Naive thymus-derived CD4-positive, alpha-beta T cell (primary cell): ENCODE measurements at regions of chr2 and their contacts with region 1.

Region 1: DNA sequence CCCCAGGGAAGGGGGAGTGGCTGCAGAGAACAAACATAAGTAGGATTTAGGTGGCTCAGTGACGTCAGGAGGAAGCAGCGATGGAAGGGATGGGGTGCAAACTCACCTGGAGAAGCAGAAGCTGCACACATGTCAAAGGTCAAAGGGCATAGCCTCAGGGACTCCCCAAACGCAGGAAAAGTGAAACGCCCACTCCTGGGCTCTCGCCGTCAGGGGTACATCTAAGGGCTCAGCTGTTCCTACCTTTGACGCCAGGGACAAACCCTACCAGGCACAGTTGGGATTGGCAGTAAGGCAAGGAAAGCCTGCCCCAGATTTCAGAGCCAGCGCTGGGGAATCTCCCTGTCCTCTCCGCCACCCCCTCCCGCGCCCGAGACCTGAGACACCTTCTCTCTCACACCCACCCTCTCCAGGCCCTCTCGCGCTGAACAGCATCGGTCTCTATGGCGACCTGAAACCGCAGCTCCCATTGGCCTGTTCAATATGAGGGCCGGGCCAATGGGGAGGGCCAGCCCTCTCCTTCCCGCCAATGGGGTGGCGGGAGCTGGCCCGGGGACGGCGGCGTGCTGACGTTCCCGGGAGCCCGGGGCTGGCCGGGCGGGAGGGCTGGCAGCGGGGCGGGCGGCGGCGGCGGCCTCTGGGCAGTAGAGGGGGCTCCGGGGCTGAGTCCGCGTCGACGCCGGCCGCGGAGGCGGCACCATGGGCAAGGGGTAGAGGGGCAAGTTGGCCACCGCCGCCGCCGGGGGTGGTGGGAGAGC is at the starts of genes CCDC148 and PKP4:
- DNase-seq: peak; percentile 70 to 94 (median 87)
- ATAC-seq: peak; percentile 95
- H3K4me3 ChIP-seq: peak within 1 kb of the TSS; percentile 79
- H3K4me3 Mint-ChIP-seq: peak within 1 kb of the TSS; percentile 88 to 97 (median 94)
- H3K27ac ChIP-seq: peak within 1 kb of the TSS; percentile 70
- H3K27ac Mint-ChIP-seq: peak within 1 kb of the TSS; percentile 70 to 89 (median 82)
- H3K4me1 ChIP-seq: peaks cover 0 to 11% of the 10 kb centered on the region in 2 donors
- H3K4me1 Mint-ChIP-seq: peaks cover 13 to 27% (median 22%) of the 10 kb centered on the region in 7 donors
- H3K27me3 ChIP-seq: no peaks in the 10 kb centered on the region
- H3K27me3 Mint-ChIP-seq: peaks cover 0 to 52% (median 6%) of the 10 kb centered on the region in 5 donors
- total RNA-seq, gene CCDC148: 0.54 TPM in 1 of 5 experiments, not detected in the others
- total RNA-seq, gene PKP4: 15.1 to 33.2 (median 23.2) TPM

Region 2: GRCh38 chr2:157443795-157444640 is 1012.5 kb before region 1 on chr2 and contains the start of gene CYTIP:
- CTCF ChIA-PET with region 1: no interaction called
- POLR2A ChIA-PET with region 1: no interaction called
- intact Hi-C with region 1: loop called in 1 of 2 experiments (anchors 10 kb)
- DNase-seq: peak; percentile 32 to 85 (median 78)
- ATAC-seq: peak; percentile 71
- H3K4me3 ChIP-seq: peak within 1 kb of the TSS; percentile 97
- H3K4me3 Mint-ChIP-seq: peak within 1 kb of the TSS; percentile 92 to 100 (median 97)
- H3K27ac ChIP-seq: peak within 1 kb of the TSS; percentile 89
- H3K27ac Mint-ChIP-seq: peak within 1 kb of the TSS; percentile 95 to 100 (median 98)
- H3K4me1 ChIP-seq: peaks cover 30 to 34% of the 10 kb centered on the region in 2 donors
- H3K4me1 Mint-ChIP-seq: peaks cover 32 to 48% (median 46%) of the 10 kb centered on the region in 7 donors
- H3K27me3 ChIP-seq: no peaks in the 10 kb centered on the region
- H3K27me3 Mint-ChIP-seq: no peaks in the 10 kb centered on the region
- total RNA-seq, gene CYTIP: 290 to 406 (median 363) TPM

Region 3: GRCh38 chr2:157876066-157876787 is 580.3 kb before region 1 on chr2 and contains the start of gene ACVR1:
- CTCF ChIA-PET with region 1: no interaction called
- POLR2A ChIA-PET with region 1: no interaction called
- intact Hi-C with region 1: loop called (anchors 1 kb)
- DNase-seq: peak; percentile 68 to 85 (median 75)
- ATAC-seq: peak; percentile 86
- H3K4me3 ChIP-seq: peak within 1 kb of the TSS; percentile 60
- H3K4me3 Mint-ChIP-seq: peak within 1 kb of the TSS; percentile 90 to 98 (median 96)
- H3K27ac ChIP-seq: peak within 1 kb of the TSS; percentile 77
- H3K27ac Mint-ChIP-seq: peak within 1 kb of the TSS; percentile 83 to 96 (median 90)
- H3K4me1 ChIP-seq: peaks cover 12 to 19% of the 10 kb centered on the region in 2 donors
- H3K4me1 Mint-ChIP-seq: peaks cover 24 to 63% (median 53%) of the 10 kb centered on the region in 7 donors
- H3K27me3 ChIP-seq: no peaks in the 10 kb centered on the region
- H3K27me3 Mint-ChIP-seq: no peaks in the 10 kb centered on the region
- total RNA-seq, gene ACVR1: 13.3 to 42.0 (median 20.6) TPM

Region 4: GRCh38 chr2:158024288-158024898 is 432.1 kb before region 1 on chr2:
- CTCF ChIA-PET with region 1: no interaction called
- POLR2A ChIA-PET with region 1: no interaction called
- intact Hi-C with region 1: loop called in 1 of 2 experiments (anchors 5 kb)
- DNase-seq: peak in 8 of 9 donors; percentile 14 to 60 (median 41)
- ATAC-seq: peak; percentile 70
- H3K4me3 ChIP-seq: no peak overlapping the region
- H3K4me3 Mint-ChIP-seq: no peak overlapping the region
- H3K27ac ChIP-seq: no peak overlapping the region
- H3K27ac Mint-ChIP-seq: no peak overlapping the region
- H3K4me1 ChIP-seq: no peaks in the 10 kb centered on the region
- H3K4me1 Mint-ChIP-seq: peaks cover 4 to 15% (median 9%) of the 10 kb centered on the region in 7 donors
- H3K27me3 ChIP-seq: no peaks in the 10 kb centered on the region
- H3K27me3 Mint-ChIP-seq: peaks cover 0 to 10% (median 0%) of the 10 kb centered on the region in 5 donors

Region 5: GRCh38 chr2:158546412-158547144 is 90.1 kb after region 1 on chr2:
- CTCF ChIA-PET with region 1: no interaction called
- POLR2A ChIA-PET with region 1: no interaction called
- intact Hi-C with region 1: loop called in 1 of 2 experiments (anchors 2 kb)
- DNase-seq: no peak
- ATAC-seq: no peak
- H3K4me3 ChIP-seq: no peak overlapping the region
- H3K4me3 Mint-ChIP-seq: peak overlapping the region in 5 of 10 donors; percentile 2 to 37 (median 25)
- H3K27ac ChIP-seq: no peak overlapping the region
- H3K27ac Mint-ChIP-seq: peak overlapping the region; percentile 25 to 91 (median 73)
- H3K4me1 ChIP-seq: peaks cover 0 to 3% of the 10 kb centered on the region in 2 donors
- H3K4me1 Mint-ChIP-seq: peaks cover 0 to 22% (median 17%) of the 10 kb centered on the region in 7 donors
- H3K27me3 ChIP-seq: no peaks in the 10 kb centered on the region
- H3K27me3 Mint-ChIP-seq: no peaks in the 10 kb centered on the region

Region 6: DNA sequence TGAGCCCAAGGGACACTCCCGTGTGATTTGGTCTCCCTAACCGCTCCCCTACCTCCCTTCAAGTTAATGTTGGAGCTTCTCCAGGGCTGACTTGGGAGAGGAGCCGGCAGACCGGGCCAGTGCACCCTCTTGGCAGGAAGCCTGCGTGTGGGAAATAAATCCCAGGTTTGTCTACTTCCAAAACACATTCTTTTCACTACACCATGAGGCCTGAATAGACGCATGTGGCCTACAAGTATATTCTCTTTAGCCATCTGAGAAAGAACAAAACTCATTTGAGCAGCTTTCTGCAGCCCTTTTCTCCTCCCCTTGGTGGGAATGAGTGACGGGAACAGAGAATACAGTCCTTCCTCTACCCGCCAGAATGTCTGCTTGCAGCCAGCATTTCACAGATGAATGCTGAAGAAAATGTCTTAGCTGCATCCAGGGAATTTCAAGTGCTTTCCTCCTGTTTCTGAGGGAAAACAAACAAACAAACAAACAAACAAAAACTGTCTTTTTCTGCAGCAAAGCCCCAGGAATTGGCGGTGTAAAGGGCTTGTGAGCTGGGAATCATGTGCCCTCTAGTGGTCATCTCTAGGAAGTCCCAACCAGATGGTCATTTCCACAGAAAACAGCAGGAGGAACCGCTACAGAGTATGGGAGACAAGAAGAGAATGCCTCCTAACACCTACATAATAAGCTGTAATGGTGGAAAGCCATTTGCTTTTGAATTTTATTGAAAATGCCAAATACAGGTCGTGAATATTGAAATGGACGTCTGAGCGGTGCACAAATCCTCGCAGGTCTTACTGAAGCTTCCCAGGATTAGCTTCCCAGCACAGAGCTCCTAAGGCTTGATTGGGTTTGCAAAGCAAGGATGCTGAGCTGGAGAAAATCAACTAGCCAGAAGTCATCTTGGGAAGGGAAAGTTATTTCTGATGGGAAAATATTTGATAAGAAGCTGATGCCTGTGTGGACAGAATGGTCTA is 297.4 kb after region 1 on chr2:
- CTCF ChIA-PET with region 1: no interaction called
- POLR2A ChIA-PET with region 1: no interaction called
- intact Hi-C with region 1: loop called in 1 of 2 experiments (anchors 5 kb)
- DNase-seq: peak in 5 of 9 donors; percentile 21 to 51 (median 42)
- ATAC-seq: peak; percentile 75
- H3K4me3 ChIP-seq: no peak overlapping the region
- H3K4me3 Mint-ChIP-seq: no peak overlapping the region
- H3K27ac ChIP-seq: no peak overlapping the region
- H3K27ac Mint-ChIP-seq: no peak overlapping the region
- H3K4me1 ChIP-seq: no peaks in the 10 kb centered on the region
- H3K4me1 Mint-ChIP-seq: no peaks in the 10 kb centered on the region
- H3K27me3 ChIP-seq: no peaks in the 10 kb centered on the region
- H3K27me3 Mint-ChIP-seq: peaks cover 0 to 29% (median 13%) of the 10 kb centered on the region in 5 donors

Region 7: DNA sequence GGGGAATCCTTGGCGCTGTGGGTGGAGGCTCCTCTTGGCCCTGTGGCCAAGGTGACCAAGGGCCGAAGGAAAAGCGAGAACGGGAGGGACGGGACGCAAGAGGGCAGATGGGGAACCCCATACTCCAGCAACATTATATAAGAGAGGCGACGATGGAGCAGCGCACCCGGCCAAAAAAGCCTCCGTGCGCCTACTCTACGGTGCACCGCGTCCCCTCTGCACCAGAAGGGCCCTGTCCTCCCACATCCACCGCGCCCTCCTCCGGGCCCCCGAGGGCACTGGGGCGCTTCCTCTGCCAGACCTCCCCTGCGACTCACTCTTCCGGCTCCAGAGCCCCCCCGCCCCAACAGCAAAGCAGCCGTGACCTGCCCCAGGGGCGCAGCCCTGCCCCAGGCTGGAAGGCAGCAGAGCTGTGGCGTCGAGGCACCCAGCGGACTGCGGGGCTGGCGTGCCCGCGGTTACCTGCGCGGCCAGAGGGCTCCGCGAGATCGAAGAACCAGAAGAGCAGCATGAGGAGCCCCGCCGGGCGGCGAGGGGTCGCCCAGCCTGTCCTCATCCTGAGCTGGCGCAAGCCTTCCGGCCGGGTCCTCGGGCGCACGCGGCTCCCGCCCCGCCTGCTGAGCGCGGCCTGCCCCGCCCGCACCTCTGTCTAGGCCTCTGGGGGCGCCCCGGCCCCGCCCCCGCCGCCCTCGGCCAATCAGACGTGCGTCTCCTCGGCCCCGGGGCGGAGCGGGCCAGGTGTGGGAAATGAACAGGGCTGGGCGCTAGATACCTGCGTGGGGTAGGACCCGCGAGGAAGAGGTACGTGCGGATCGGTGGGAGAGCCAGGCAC is 1447.9 kb after region 1 on chr2:
- CTCF ChIA-PET with region 1: no interaction called
- POLR2A ChIA-PET with region 1: no interaction called
- intact Hi-C with region 1: loop called (anchors 2 kb)
- DNase-seq: peak; percentile 70 to 85 (median 83)
- ATAC-seq: peak; percentile 91
- H3K4me3 ChIP-seq: peak within 1 kb of the TSS; percentile 95
- H3K4me3 Mint-ChIP-seq: peak within 1 kb of the TSS; percentile 93 to 100 (median 98)
- H3K27ac ChIP-seq: peak within 1 kb of the TSS; percentile 87
- H3K27ac Mint-ChIP-seq: peak within 1 kb of the TSS; percentile 96 to 100 (median 98)
- H3K4me1 ChIP-seq: peaks cover 3 to 8% of the 10 kb centered on the region in 2 donors
- H3K4me1 Mint-ChIP-seq: peaks cover 24 to 52% (median 41%) of the 10 kb centered on the region in 7 donors
- H3K27me3 ChIP-seq: no peaks in the 10 kb centered on the region
- H3K27me3 Mint-ChIP-seq: peaks cover 0 to 3% (median 0%) of the 10 kb centered on the region in 5 donors